CD4-positive, alpha-beta T cell (primary cell): ENCODE measurements at regions of chr3 and their contacts with region 1.

Region 1: DNA sequence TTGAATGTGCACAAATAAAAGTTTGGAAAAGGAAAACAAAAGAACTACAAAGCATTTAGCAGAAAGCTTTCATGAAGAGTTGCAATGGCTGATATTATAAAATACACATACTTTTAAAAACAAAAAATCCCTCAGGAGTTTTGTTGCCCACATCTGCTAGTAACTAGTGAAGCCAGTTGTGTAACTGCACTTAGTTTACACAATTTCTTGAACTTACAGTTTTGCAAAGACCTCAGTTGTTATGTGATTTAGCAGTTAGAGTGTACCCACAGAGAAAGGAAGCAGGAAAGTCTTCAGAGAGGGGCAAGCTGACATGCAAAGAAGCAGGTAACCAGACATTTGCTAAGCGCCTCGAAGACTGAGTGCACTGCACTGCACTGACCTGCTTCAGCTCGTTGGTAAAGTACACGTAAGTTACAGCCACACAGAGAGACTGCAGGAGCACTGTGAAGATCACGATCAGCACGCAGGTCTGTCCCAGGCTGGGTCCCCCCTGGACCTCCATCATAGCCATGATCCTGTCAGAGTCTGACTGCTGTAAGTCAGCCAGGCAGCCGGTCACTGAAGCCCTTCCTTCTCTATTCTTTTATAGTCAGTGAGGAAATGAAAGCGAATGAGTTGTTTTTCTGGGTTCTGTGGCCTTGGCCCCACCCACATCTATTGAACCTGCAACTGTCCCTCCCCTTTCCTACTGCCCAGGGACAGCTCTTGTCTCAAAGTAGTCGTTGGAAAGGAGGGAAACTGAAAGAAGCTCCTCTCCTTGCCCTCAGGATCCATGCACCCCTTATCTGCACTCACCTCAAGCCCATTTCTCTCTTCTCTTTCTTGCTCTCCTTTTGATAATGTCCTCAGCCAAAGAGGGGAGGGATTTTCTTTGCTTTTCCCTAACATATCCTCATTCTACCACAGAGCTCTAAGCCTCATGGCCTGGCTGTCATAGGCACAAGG is at the start of gene TNFSF10:
- DNase-seq: peak in 13 of 14 experiments; percentile 29 to 89 (median 53)
- ATAC-seq: peak; percentile 73
- H3K4me3 ChIP-seq: peak within 1 kb of the TSS; percentile 64
- H3K4me3 Mint-ChIP-seq: peak within 1 kb of the TSS; percentile 91
- H3K27ac ChIP-seq: peak within 1 kb of the TSS; percentile 57 to 65
- H3K27ac Mint-ChIP-seq: peak within 1 kb of the TSS; percentile 93
- H3K4me1 ChIP-seq: peaks cover 29% of the 10 kb centered on the region
- H3K4me1 Mint-ChIP-seq: peaks cover 70% of the 10 kb centered on the region
- H3K27me3 ChIP-seq: no peaks in the 10 kb centered on the region
- H3K27me3 Mint-ChIP-seq: no peaks in the 10 kb centered on the region
- CTCF ChIP-seq: no peak
- total RNA-seq, gene TNFSF10: 9.2 to 9.5 TPM

Region 2: DNA sequence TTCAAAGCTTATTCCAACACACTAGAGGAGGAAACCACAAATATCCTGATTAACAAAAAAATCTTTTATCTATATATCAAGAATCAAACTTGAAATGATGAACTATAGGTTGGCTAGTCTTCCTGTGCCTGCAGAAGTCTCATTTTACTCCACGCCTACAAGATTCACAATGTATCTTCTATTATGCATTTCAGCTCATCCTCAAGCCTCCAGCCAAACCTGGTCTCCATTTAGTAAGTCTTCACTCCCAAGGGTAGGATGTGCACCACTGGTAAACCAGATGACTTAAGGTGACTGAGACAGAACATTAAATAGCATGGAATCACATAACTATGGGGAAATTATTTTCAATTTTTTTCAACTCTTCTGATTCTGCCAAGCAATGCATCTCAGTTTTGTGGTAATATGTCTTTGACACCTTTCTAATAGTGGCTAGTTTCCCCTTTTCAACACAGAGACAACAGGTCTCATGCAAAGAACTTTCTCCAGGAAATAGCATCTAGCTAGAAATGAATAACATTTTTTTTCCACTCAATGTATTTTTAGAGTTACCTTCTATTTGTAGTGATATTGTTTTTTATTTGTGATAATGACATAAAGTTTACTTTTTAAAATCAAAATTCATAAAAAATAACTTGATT is 1229.9 kb before region 1 on chr3:
- CTCF ChIA-PET with region 1: no interaction called
- POLR2A ChIA-PET with region 1: no interaction called
- intact Hi-C with region 1: no loop called
- DNase-seq: peak in 1 of 14 experiments; percentile 32
- ATAC-seq: no peak
- H3K4me3 ChIP-seq: no peak overlapping the region
- H3K4me3 Mint-ChIP-seq: no peak overlapping the region
- H3K27ac ChIP-seq: no peak overlapping the region
- H3K27ac Mint-ChIP-seq: peak overlapping the region; percentile 57
- H3K4me1 ChIP-seq: peaks cover 25% of the 10 kb centered on the region
- H3K4me1 Mint-ChIP-seq: peaks cover 69% of the 10 kb centered on the region
- H3K27me3 ChIP-seq: no peaks in the 10 kb centered on the region
- H3K27me3 Mint-ChIP-seq: no peaks in the 10 kb centered on the region
- CTCF ChIP-seq: no peak

Region 3: GRCh38 chr3:172511783-172512762 is 11.1 kb before region 1 on chr3:
- CTCF ChIA-PET with region 1: interaction called, 8 read pairs
- POLR2A ChIA-PET with region 1: interaction called, 11 read pairs
- intact Hi-C with region 1: no loop called
- DNase-seq: peak in 12 of 14 experiments; percentile 36 to 80 (median 58)
- ATAC-seq: peak; percentile 64
- H3K4me3 ChIP-seq: peak overlapping the region; percentile 15
- H3K4me3 Mint-ChIP-seq: peak overlapping the region; percentile 67
- H3K27ac ChIP-seq: peak overlapping the region; percentile 57 to 67
- H3K27ac Mint-ChIP-seq: peak overlapping the region; percentile 93
- H3K4me1 ChIP-seq: peaks cover 63% of the 10 kb centered on the region
- H3K4me1 Mint-ChIP-seq: peaks cover 73% of the 10 kb centered on the region
- H3K27me3 ChIP-seq: no peaks in the 10 kb centered on the region
- H3K27me3 Mint-ChIP-seq: no peaks in the 10 kb centered on the region
- CTCF ChIP-seq: no peak

Region 4: GRCh38 chr3:172562871-172563863 is 40.0 kb after region 1 on chr3:
- CTCF ChIA-PET with region 1: interaction called, 5 read pairs
- POLR2A ChIA-PET with region 1: interaction called, 13 read pairs
- intact Hi-C with region 1: no loop called
- DNase-seq: peak in 4 of 14 experiments; percentile 11 to 62 (median 42)
- ATAC-seq: peak; percentile 39
- H3K4me3 ChIP-seq: peak overlapping the region; percentile 30
- H3K4me3 Mint-ChIP-seq: peak overlapping the region; percentile 70
- H3K27ac ChIP-seq: peak overlapping the region in 1 of 2 donors; percentile 61
- H3K27ac Mint-ChIP-seq: peak overlapping the region; percentile 86
- H3K4me1 ChIP-seq: peaks cover 9% of the 10 kb centered on the region
- H3K4me1 Mint-ChIP-seq: peaks cover 25% of the 10 kb centered on the region
- H3K27me3 ChIP-seq: no peaks in the 10 kb centered on the region
- H3K27me3 Mint-ChIP-seq: no peaks in the 10 kb centered on the region
- CTCF ChIP-seq: no peak

Region 5: DNA sequence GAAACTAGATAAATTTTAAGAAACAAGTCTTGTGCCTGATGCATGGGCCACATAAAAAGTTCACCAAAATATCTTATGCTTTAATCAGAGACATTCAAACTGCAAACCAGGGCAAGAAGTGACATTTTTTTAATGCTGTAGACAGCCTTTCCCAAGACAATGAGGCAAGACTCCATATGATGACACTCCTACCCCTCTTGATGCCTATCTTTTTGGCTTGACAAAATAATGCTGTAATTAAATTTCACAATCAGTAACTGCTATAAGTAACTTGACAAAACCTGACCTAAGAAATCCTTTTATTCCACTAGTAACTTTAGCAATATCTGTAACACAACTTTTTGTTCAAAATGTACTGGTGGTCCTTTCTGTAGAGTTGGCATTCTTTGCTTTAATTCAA is 276.1 kb after region 1 on chr3:
- CTCF ChIA-PET with region 1: no interaction called
- POLR2A ChIA-PET with region 1: no interaction called
- intact Hi-C with region 1: no loop called
- DNase-seq: no peak
- ATAC-seq: no peak
- H3K4me3 ChIP-seq: no peak overlapping the region
- H3K4me3 Mint-ChIP-seq: no peak overlapping the region
- H3K27ac ChIP-seq: no peak overlapping the region
- H3K27ac Mint-ChIP-seq: no peak overlapping the region
- H3K4me1 ChIP-seq: no peaks in the 10 kb centered on the region
- H3K4me1 Mint-ChIP-seq: no peaks in the 10 kb centered on the region
- H3K27me3 ChIP-seq: no peaks in the 10 kb centered on the region
- H3K27me3 Mint-ChIP-seq: no peaks in the 10 kb centered on the region
- CTCF ChIP-seq: no peak